ENCODE measurements at regions of chr14 and their contacts with region 1.

Region 1: DNA sequence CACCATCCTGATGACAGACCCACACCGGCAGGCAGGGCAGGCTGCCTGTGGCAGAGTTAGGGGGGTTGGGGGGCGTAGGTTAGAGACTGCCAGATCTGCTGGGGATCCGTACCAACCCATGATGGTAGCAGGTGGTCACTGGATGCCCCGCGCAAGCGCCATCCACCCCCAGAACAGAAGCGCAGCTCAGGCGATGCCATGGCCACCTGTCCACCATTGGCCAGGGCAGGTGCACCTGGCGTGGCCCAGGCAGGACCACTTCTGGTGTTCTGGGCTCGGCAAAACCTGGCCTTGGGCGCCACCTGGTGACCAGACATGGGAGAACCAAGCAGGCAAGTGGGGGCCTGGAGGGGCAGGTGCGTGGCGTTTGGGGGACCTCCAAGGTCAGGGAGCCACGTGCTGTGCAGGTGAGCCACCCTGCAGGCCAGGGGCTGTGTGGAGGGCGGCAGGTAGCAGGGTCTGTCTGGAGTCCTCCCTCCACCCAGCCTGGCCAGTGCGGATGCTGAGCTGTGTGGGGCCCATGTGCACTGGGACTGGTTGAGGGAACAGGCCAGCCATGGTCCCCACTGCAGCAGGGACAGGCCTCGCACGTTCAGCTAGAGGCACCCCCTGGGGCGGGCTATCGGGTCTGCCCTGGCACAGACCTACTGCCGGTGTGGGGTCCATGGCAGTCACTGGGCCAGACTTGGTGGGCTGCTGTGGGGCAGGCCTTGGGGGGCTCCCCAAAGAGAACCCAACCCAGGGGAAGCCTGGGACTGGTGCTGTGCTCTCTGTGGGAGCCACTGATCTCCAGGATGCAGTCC is 15.6 kb downstream of the BAG5 start:
- DNase-seq: peak; percentile 80 to 91
- ATAC-seq: peak; percentile 34
- H3K4me3 ChIP-seq: no peak overlapping the region
- H3K27ac ChIP-seq: no peak overlapping the region
- H3K4me1 ChIP-seq: no peaks in the 10 kb centered on the region
- H3K27me3 ChIP-seq: no peaks in the 10 kb centered on the region

Region 2: GRCh38 chr14:103333754-103334643 is 212.9 kb before region 1 on chr14 and contains the start of gene EIF5:
- intact Hi-C with region 1: no loop called
- DNase-seq: peak; percentile 99
- ATAC-seq: peak; percentile 98
- H3K4me3 ChIP-seq: peak within 1 kb of the TSS; percentile 61 to 99
- H3K27ac ChIP-seq: peak within 1 kb of the TSS; percentile 97 to 99
- H3K4me1 ChIP-seq: no peaks in the 10 kb centered on the region
- H3K27me3 ChIP-seq: no peaks in the 10 kb centered on the region
- total RNA-seq, gene EIF5: 202 to 218 TPM

Region 3: GRCh38 chr14:103500148-103500990 is 46.5 kb before region 1 on chr14:
- intact Hi-C with region 1: loop called (anchors 1 to 5 kb)
- DNase-seq: peak; percentile 92 to 97
- ATAC-seq: peak; percentile 96
- H3K4me3 ChIP-seq: no peak overlapping the region
- H3K27ac ChIP-seq: no peak overlapping the region
- H3K4me1 ChIP-seq: no peaks in the 10 kb centered on the region
- H3K27me3 ChIP-seq: no peaks in the 10 kb centered on the region

Region 4: DNA sequence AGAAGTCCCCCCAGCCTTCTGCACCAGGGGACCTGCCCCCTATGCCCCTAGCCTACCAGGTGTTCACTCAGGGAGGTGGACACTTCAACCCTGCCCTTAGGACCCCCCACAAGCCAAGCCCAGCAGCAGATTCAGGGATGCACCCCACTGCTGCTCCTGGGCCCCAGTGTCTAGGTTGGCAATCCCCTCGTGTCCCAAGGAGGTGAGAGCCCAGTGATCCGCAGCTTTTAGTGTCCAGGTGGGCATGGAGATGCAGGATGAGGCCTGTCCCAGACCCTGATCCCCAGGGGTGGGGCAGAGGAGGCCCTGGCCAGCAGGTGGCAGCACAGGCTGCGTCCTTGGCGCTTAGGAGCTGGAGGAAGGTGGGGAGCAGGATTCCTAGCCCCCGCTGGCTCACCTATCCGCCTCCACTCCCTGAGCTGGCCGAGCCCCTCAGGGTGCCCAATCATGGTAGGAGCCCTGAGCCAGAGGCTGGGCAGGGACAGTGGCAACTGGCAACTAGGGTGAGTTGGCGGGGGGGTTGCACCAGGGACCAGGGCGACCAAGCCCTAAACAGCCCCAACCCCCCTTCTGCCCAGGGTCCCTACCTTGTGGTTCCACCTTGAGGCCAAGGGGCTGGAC is 28.3 kb before region 1 on chr14:
- intact Hi-C with region 1: loop called (anchors 2 kb)
- DNase-seq: peak; percentile 71 to 90
- ATAC-seq: peak; percentile 60
- H3K4me3 ChIP-seq: no peak overlapping the region
- H3K27ac ChIP-seq: no peak overlapping the region
- H3K4me1 ChIP-seq: no peaks in the 10 kb centered on the region
- H3K27me3 ChIP-seq: no peaks in the 10 kb centered on the region

Measured in aorta (tissue), 5 donors.